ENCODE measurements at regions of chr14 and their contacts with region 1.

Region 1: DNA sequence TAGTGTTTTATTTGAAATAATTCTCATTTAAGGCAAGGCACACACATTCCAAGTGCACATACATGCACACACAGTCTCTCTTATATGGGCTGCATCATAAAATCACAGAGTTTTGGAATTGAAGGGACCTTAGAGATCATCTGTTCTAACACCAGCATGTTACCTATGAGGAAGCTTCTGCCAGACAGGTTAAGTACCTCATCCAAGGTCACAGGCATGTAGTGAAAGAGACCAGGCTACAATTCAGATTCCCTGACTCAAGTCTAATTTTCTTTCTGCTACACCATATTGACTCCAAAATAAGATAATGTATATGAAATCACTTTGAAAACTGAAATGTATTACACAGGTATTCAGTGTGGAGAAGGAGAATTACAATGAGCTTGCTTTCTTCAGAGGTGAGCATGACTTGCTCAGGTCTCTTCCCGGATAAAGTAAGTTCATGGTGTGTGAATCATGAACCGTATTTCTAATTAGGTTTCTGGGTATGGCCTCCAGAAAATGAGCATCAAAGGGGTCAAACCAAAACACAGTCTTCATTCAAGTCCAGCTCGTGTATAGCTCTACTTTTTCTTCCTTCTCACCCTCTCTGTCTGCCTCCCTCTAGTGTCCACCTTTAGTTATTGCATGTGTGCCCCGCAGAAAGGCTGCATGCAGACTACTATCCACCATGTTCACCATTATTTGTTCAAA is 411.9 kb downstream of the FUT8 start:
- DNase-seq: peak; percentile 71 to 86 (median 78)
- H3K4me3 ChIP-seq: no peak overlapping the region
- H3K27ac ChIP-seq: no peak overlapping the region
- H3K4me1 ChIP-seq: no peaks in the 10 kb centered on the region
- H3K27me3 ChIP-seq: peaks cover 0 to 5% (median 0%) of the 10 kb centered on the region in 5 experiments

Region 2: GRCh38 chr14:65164068-65164824 is 660.2 kb before region 1 on chr14:
- CTCF ChIA-PET with region 1: interaction called, 35 read pairs
- POLR2A ChIA-PET with region 1: no interaction called
- DNase-seq: peak; percentile 58 to 78 (median 69)
- H3K4me3 ChIP-seq: no peak overlapping the region
- H3K27ac ChIP-seq: no peak overlapping the region
- H3K4me1 ChIP-seq: no peaks in the 10 kb centered on the region
- H3K27me3 ChIP-seq: no peaks in the 10 kb centered on the region

Region 3: GRCh38 chr14:65810322-65810721 is 14.1 kb before region 1 on chr14:
- CTCF ChIA-PET with region 1: interaction called, 25 read pairs
- POLR2A ChIA-PET with region 1: no interaction called
- DNase-seq: no peak
- H3K4me3 ChIP-seq: no peak overlapping the region
- H3K27ac ChIP-seq: no peak overlapping the region
- H3K4me1 ChIP-seq: peaks cover 0 to 5% (median 0%) of the 10 kb centered on the region in 4 experiments
- H3K27me3 ChIP-seq: no peaks in the 10 kb centered on the region